Right cardiac atrium (tissue), 5 donors: ENCODE measurements at regions of chr16 and their contacts with region 1.

Region 1: DNA sequence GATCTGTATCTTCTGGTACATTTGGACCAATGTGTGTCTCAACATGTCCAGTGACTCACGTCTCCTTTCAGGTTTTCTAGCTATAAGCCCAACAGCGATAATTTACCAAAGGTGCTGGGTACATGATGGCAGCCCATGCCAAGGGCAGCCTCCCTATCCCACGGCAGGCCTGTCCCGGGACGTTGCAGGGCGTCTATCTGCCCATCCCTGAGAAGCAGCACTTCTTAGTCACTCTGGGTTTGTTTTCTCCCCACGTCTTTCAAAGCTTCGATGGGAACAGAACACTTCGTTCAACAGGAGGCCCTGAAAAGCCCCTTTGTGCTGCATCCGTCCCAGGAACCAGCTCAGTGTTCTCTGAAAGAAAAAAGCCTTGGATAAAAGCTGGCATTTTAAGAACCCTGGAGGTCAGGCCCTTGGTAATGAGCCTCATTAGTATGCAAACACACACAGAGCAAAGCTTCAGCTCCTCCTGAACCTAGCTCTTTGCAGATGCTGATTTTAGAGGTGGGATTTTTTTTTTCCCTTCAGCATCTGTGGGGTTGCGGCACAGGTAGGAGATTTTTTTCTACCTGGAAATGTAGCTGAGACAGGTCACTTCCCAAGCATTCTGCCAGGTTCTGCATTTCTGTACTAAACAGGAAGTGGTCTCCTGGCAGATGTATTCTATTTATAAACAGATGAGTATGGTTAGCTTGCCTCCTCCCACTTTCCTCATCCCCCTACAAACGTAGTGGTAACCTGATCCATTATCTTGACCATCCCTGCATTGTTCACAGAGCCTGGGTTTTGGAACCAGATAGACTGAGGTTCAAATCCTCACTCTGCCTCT is 17.5 kb upstream of the MT4 start:
- DNase-seq: no peak
- ATAC-seq: no peak
- H3K4me3 ChIP-seq: no peak overlapping the region
- H3K27ac ChIP-seq: peak overlapping the region; percentile 53
- H3K4me1 ChIP-seq: peaks cover 2% of the 10 kb centered on the region
- H3K27me3 ChIP-seq: no peaks in the 10 kb centered on the region

Region 2: DNA sequence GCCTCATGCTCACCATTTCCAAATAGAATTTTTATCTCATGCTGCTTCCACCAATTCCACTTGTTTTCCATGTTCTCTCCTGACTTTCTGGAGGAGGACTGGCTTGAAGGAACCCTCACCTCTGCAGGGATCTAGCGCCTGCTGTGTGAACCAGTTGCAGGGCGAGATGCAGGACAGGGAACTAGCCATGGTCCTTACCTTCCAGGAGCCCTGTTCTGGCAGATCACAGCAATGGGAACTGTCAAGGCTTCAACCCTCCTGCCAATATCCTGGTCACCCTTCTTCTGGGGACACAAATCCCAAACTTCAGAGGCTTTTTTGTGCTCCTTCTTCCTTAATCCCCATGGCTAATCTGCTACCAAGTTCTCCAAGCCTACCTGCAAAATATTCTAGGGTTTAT is 1128.7 kb before region 1 on chr16:
- intact Hi-C with region 1: no loop called
- DNase-seq: no peak
- ATAC-seq: no peak
- H3K4me3 ChIP-seq: no peak overlapping the region
- H3K27ac ChIP-seq: no peak overlapping the region
- H3K4me1 ChIP-seq: no peaks in the 10 kb centered on the region
- H3K27me3 ChIP-seq: no peaks in the 10 kb centered on the region

Region 3: DNA sequence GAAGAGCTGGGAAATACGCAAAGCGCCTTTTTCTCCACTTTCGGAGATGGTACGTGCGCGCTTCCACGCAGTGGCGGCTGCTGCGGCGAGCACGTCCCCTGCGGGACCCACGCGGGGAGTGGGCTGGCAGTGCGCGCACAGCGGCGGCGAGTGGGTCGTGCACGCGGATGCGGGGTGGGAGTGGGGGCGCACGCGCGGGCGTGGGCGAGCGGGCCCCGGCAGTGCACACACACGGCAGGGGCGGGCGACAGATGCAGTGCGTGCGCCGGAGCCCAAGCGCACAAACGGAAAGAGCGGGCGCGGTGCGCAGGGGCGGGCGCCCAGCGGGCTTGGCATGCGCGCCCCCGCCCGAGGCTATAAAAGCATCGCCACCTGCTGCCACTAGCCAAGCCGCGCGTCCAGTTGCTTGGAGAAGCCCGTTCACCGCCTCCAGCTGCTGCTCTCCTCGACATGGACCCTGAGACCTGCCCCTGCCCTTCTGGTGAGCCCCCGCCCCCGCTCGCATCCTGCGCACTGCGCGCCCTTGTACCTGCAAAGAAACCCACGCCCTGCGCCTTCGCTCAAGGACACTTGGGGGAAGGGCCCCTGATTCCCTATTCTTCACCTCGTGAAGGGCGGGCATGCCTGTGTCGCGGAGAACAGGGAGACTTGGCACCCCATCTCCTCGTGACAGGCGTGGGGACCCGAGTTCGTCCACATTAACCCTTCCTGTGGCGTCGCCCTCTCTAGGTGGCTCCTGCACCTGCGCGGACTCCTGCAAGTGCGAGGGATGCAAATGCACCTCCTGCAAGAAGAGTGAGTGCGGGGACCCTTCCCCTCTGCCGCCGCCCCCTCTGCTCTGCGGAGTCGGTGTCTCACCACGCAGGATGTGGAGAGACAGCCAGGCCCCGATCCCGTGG is 42.1 kb after region 1 on chr16 and contains the start of gene MT3:
- intact Hi-C with region 1: loop called in 1 of 4 experiments (anchors 10 kb)
- DNase-seq: no peak
- ATAC-seq: peak in 1 of 2 donors; percentile 48
- H3K4me3 ChIP-seq: peak within 1 kb of the TSS; percentile 28
- H3K27ac ChIP-seq: no peak within 1 kb of the TSS
- H3K4me1 ChIP-seq: no peaks in the 10 kb centered on the region
- H3K27me3 ChIP-seq: no peaks in the 10 kb centered on the region
- total RNA-seq, gene MT3: 2.0 to 6.1 (median 3.3) TPM